Heart right ventricle (tissue), 16 donors: ENCODE measurements at regions of chr10 and their contacts with region 1.

Region 1: DNA sequence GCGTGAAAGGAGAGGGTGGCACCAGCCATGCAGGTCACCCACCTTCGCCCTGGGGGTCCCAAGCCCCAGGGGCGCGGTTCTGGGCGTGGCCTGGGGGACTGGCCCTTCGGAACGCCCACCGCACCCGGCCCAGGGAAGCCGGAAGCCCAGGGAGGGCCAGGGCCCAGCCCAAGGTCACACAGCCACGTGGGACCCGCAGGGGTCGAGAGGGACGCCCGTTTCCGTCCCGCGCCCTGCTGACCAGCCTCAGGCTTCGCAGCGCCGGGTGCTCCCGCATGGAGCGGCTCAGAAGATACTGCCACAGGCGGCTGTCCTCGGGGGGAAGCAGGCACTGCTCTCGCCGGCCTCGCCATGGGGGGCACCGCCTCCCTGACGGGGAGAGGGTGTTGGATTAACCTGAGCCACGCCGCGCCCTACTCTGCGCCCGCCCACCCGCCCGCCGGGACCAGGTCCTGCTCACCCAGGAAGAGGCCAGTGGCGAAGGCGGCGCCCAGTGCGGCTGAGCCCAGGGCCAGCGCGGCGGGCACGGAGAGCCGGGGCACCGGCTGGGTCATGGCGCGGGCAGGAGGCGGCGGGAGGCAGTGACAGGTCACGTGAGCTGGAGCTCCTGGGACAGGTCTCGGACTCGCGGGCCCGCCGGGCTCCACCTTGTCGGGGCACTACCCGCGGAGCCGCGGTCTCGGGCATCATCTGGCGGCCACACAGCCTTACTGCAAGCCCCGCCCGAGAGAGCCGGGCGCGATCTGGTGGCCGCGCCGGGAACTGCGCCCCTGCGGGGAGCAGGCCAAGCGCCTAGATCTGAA is at the start of gene COMTD1:
- DNase-seq: peak; percentile 90 to 94
- ATAC-seq: peak; percentile 72 to 88 (median 82)
- H3K4me3 ChIP-seq: peak within 1 kb of the TSS; percentile 67 to 95 (median 86)
- H3K27ac ChIP-seq: peak within 1 kb of the TSS; percentile 6 to 93 (median 88)
- H3K4me1 ChIP-seq: peaks cover 0 to 29% (median 16%) of the 10 kb centered on the region in 9 donors
- H3K27me3 ChIP-seq: no peaks in the 10 kb centered on the region
- CTCF ChIP-seq: peak; percentile 100
- total RNA-seq, gene COMTD1: 16.4 to 51.5 (median 29.4) TPM

Region 2: DNA sequence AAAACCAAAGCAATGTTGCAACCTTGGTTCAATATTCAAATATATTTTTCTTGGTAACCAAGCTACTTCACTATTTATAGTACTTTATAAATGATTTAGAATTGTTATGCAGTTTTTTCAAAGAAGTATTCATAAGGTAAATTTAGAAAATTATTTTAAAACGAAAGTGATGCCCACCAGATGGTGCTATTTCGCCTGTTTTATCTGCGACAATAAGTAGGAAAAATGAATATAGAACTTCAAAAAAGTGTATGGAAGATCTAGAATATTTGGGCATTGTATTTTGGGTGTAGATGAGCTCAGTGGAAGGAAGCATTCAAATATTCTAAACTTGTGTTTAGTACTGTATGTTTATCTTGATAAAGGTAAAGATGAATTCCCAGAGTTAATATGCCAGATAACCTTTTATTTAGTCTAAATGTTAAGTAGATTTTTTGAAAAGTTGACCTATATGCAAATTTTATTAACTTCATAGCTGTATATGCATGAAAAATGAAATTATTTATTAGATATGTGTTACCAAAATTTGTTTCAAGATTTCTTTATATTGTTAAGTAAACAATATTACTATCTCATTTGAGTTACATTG is 991.4 kb before region 1 on chr10:
- intact Hi-C with region 1: loop called in 6 of 10 experiments (anchors 2 to 10 kb)
- DNase-seq: peak in 1 of 2 donors; percentile 19
- ATAC-seq: no peak
- H3K4me3 ChIP-seq: no peak overlapping the region
- H3K27ac ChIP-seq: no peak overlapping the region
- H3K4me1 ChIP-seq: no peaks in the 10 kb centered on the region
- H3K27me3 ChIP-seq: no peaks in the 10 kb centered on the region
- CTCF ChIP-seq: peak; percentile 13 to 73 (median 57)

Region 3: DNA sequence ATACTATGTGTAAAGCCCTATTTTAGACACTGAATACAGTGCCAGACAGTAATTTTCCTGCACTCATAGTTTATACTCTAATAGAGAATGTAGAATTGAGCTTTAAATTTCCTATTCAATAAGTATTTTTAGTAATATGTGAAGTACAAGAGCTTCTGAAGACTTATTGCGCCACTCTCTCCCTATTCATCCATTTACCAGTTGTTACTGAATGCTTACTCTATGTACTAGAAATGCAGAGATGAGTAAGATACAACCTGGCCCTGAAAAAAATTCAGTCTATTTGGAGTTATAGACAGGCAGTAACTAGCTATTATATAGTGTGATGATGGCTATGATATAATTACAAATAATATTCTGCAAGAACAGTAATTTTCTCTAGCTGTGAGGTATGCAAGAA is 985.7 kb before region 1 on chr10:
- intact Hi-C with region 1: loop called in 2 of 10 experiments (anchors 5 to 10 kb)
- DNase-seq: no peak
- ATAC-seq: no peak
- H3K4me3 ChIP-seq: no peak overlapping the region
- H3K27ac ChIP-seq: no peak overlapping the region
- H3K4me1 ChIP-seq: no peaks in the 10 kb centered on the region
- H3K27me3 ChIP-seq: no peaks in the 10 kb centered on the region
- CTCF ChIP-seq: no peak

Region 4: GRCh38 chr10:74262856-74263255 is 972.7 kb before region 1 on chr10:
- intact Hi-C with region 1: loop called in 5 of 10 experiments (anchors 2 to 5 kb)
- DNase-seq: no peak
- ATAC-seq: no peak
- H3K4me3 ChIP-seq: no peak overlapping the region
- H3K27ac ChIP-seq: no peak overlapping the region
- H3K4me1 ChIP-seq: peaks cover 0 to 5% (median 0%) of the 10 kb centered on the region in 9 donors
- H3K27me3 ChIP-seq: no peaks in the 10 kb centered on the region
- CTCF ChIP-seq: no peak

Region 5: GRCh38 chr10:75019370-75019769 is 216.2 kb before region 1 on chr10:
- intact Hi-C with region 1: loop called in 1 of 10 experiments (anchors 10 kb)
- DNase-seq: no peak
- ATAC-seq: peak in 1 of 8 donors; percentile 41
- H3K4me3 ChIP-seq: no peak overlapping the region
- H3K27ac ChIP-seq: no peak overlapping the region
- H3K4me1 ChIP-seq: peaks cover 0 to 26% (median 15%) of the 10 kb centered on the region in 9 donors
- H3K27me3 ChIP-seq: no peaks in the 10 kb centered on the region
- CTCF ChIP-seq: peak in 6 of 9 donors; percentile 29 to 53 (median 46)

Region 6: GRCh38 chr10:75111367-75111906 is 124.1 kb before region 1 on chr10 and contains the start of gene SAMD8:
- intact Hi-C with region 1: loop called in 7 of 10 experiments (anchors 2 to 5 kb)
- DNase-seq: peak; percentile 96 to 97
- ATAC-seq: peak; percentile 86 to 93 (median 89)
- H3K4me3 ChIP-seq: peak within 1 kb of the TSS; percentile 74 to 98 (median 81)
- H3K27ac ChIP-seq: peak within 1 kb of the TSS; percentile 85 to 99 (median 96)
- H3K4me1 ChIP-seq: peaks cover 0 to 66% (median 51%) of the 10 kb centered on the region in 9 donors
- H3K27me3 ChIP-seq: no peaks in the 10 kb centered on the region
- CTCF ChIP-seq: peak in 8 of 9 donors; percentile 47 to 61 (median 52)
- total RNA-seq, gene SAMD8: 23.8 to 31.2 (median 26.5) TPM

Region 7: DNA sequence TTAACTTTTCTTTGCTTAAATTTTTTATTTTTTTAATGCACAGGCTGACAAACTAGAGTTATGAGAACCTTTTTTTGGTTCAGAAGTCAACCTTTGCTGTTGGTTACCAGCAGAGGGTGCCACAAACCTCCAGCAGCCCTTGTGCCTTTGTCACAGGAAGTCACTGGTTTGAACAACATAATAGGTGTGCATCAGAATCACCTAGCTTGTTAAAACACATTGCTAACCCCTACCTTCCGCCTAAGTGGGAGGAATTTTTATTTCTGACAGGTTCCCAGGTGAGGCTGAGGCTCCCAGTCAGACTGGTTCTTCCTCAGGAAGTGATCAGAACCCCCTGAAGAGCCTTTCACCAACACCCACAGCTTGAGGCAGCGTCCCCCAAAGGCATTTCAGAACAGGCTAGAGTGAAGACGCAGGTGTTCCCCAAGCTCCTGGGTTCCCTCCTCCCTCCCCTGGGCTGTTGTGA is 47.6 kb before region 1 on chr10:
- intact Hi-C with region 1: loop called in 7 of 10 experiments (anchors 1 to 5 kb)
- DNase-seq: peak in 1 of 2 donors; percentile 52
- ATAC-seq: peak in 7 of 8 donors; percentile 18 to 60 (median 35)
- H3K4me3 ChIP-seq: no peak overlapping the region
- H3K27ac ChIP-seq: peak overlapping the region in 4 of 10 donors; percentile 1 to 39 (median 20)
- H3K4me1 ChIP-seq: peaks cover 0 to 38% (median 20%) of the 10 kb centered on the region in 9 donors
- H3K27me3 ChIP-seq: no peaks in the 10 kb centered on the region
- CTCF ChIP-seq: peak; percentile 47 to 80 (median 70)